Adrenal gland (tissue), 19 donors: ENCODE measurements at regions of chr19 and their contacts with region 1.

Region 1: DNA sequence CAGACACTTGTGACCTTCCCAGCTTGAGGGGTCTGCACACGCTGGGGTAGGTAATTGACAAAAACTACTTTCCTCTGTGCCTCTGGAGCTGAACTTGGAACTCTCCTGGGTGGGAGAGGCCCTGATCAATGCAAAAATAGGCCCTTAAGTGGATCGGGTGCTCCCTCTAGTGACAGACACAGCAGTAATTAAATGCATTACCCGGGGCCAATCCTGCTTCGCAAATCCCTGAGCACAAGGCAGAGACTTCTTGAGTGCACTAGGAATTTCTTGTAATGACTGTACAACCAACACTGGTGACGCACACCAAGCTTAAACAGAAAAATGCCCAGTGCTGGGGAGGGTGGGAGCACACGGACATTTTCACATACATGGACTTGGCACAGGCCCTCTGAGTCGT is 10.6 kb upstream of the UBE2S start:
- DNase-seq: peak; percentile 67 to 82 (median 76)
- H3K4me3 ChIP-seq: no peak overlapping the region
- H3K27ac ChIP-seq: no peak overlapping the region
- H3K4me1 ChIP-seq: no peaks in the 10 kb centered on the region
- H3K27me3 ChIP-seq: no peaks in the 10 kb centered on the region
- CTCF ChIP-seq: peak; percentile 69 to 86 (median 76)
- POLR2A ChIP-seq: no peak

Region 2: GRCh38 chr19:55146078-55146704 is 272.0 kb before region 1 on chr19:
- intact Hi-C with region 1: loop called (anchors 5 to 10 kb)
- DNase-seq: no peak
- H3K4me3 ChIP-seq: no peak overlapping the region
- H3K27ac ChIP-seq: no peak overlapping the region
- H3K4me1 ChIP-seq: peaks cover 0 to 7% of the 10 kb centered on the region in 2 donors
- H3K27me3 ChIP-seq: peaks cover 41% of the 10 kb centered on the region
- CTCF ChIP-seq: peak in 1 of 6 experiments; percentile 8
- POLR2A ChIP-seq: no peak